Endothelial cell of umbilical vein (primary cell): ENCODE measurements at regions of chr1 and their contacts with region 1.

Region 1: GRCh38 chr1:186363891-186364290 is 11.2 kb downstream of the TPR start:
- DNase-seq: no peak
- H3K4me3 ChIP-seq: no peak overlapping the region
- H3K27ac ChIP-seq: no peak overlapping the region
- H3K4me1 ChIP-seq: no peaks in the 10 kb centered on the region
- H3K27me3 ChIP-seq: no peaks in the 10 kb centered on the region
- CTCF ChIP-seq: no peak
- POLR2A ChIP-seq: no peak

Region 2: DNA sequence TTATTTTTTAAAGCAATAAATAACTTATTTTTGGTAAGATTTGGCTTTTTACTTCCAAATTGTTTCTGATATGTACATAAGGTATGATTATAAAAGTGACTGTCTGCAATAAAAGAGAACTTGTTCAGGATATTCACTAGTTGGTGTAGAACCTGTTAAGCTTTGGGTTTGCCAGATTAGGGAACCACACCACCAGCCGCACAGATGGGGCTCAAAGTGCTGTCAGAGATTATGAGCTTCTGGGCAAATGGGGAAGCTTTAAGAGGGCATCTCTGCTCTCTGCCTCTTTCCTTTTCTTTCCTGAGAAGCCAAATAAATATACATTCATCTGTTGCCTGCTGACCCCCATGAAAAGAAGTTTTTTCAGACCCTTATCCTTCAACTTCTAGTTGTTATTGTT is 1072.2 kb before region 1 on chr1:
- CTCF ChIA-PET with region 1: no interaction called
- POLR2A ChIA-PET with region 1: no interaction called
- dilution Hi-C with region 1: no loop called
- intact Hi-C with region 1: loop called (anchors 10 kb)
- DNase-seq: no peak
- H3K4me3 ChIP-seq: no peak overlapping the region
- H3K27ac ChIP-seq: no peak overlapping the region
- H3K4me1 ChIP-seq: no peaks in the 10 kb centered on the region
- H3K27me3 ChIP-seq: no peaks in the 10 kb centered on the region
- CTCF ChIP-seq: no peak
- POLR2A ChIP-seq: no peak

Region 3: DNA sequence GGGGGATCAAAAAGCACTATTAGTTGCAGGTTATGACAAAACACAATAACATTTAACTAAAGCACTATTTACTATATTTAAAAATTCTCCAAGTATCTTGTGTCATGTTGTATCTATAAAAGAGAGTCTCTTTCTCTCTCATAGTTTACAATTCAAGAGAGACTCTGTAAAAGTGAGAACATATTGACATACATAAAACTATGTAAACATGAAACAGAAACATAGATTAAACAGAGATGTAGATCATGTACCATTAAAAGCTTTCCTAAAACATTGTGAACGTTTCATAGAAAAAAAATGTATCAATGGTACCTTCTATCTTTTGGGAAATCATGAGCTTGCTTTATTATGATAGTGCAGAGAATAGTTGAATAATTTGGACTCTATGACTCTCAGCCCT is 658.1 kb before region 1 on chr1:
- CTCF ChIA-PET with region 1: no interaction called
- POLR2A ChIA-PET with region 1: no interaction called
- dilution Hi-C with region 1: no loop called
- intact Hi-C with region 1: no loop called
- DNase-seq: no peak
- H3K4me3 ChIP-seq: no peak overlapping the region
- H3K27ac ChIP-seq: no peak overlapping the region
- H3K4me1 ChIP-seq: no peaks in the 10 kb centered on the region
- H3K27me3 ChIP-seq: no peaks in the 10 kb centered on the region
- CTCF ChIP-seq: no peak
- POLR2A ChIP-seq: no peak

Region 4: DNA sequence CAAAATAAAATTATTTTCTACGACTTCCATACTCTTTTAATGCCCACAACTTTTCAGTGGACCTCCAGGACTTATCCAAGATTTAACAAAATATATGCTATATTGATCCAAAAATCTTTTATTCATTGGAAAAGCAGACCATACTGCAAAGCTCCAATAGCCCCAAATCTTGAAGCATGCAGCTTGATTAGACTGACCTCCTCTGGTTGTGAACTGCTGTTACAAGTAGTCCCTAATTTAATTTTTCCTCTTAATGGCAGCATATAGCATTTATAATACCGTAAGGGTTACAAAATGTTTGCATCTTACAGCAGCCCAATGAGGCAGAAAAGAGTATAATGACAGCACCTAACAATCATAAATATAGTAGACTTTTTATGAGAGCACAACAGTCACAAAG is 38.7 kb before region 1 on chr1:
- CTCF ChIA-PET with region 1: interaction called, 3 read pairs
- POLR2A ChIA-PET with region 1: no interaction called
- dilution Hi-C with region 1: no loop called
- intact Hi-C with region 1: loop called (anchors 5 kb)
- DNase-seq: peak; percentile 31
- H3K4me3 ChIP-seq: no peak overlapping the region
- H3K27ac ChIP-seq: no peak overlapping the region
- H3K4me1 ChIP-seq: no peaks in the 10 kb centered on the region
- H3K27me3 ChIP-seq: no peaks in the 10 kb centered on the region
- CTCF ChIP-seq: peak; percentile 18 to 35
- POLR2A ChIP-seq: no peak

Region 5: DNA sequence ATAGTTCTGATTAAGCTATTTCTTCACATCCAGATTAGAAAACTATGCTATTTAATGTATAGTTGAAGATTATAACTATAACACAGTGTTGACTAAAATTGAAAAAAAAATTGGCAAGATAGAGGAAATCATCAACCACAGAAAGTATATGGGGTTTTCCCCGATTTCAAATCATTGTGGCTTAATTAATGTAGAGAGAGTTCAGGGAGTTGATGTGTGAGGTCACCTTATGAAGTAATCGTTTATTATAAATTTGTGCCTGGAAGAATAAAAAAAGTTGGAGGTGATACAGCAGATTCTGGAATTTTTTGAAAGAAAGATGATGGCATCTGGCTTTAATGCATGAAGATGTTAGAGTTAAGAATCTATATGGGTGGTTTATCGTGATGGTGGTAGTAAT is 232.1 kb after region 1 on chr1:
- CTCF ChIA-PET with region 1: no interaction called
- POLR2A ChIA-PET with region 1: no interaction called
- dilution Hi-C with region 1: no loop called
- intact Hi-C with region 1: no loop called
- DNase-seq: no peak
- H3K4me3 ChIP-seq: no peak overlapping the region
- H3K27ac ChIP-seq: no peak overlapping the region
- H3K4me1 ChIP-seq: no peaks in the 10 kb centered on the region
- H3K27me3 ChIP-seq: no peaks in the 10 kb centered on the region
- CTCF ChIP-seq: no peak
- POLR2A ChIP-seq: no peak